ENCODE measurements at regions of chr16 and their contacts with region 1.

Region 1: GRCh38 chr16:77599793-77600415 is 122.4 kb upstream of the NUDT7 start:
- DNase-seq: peak; percentile 19
- ATAC-seq: peak; percentile 80
- H3K4me3 ChIP-seq: no peak overlapping the region
- H3K27ac ChIP-seq: no peak overlapping the region
- H3K4me1 ChIP-seq: no peaks in the 10 kb centered on the region
- H3K27me3 ChIP-seq: peaks cover 33% of the 10 kb centered on the region
- CTCF ChIP-seq: peak; percentile 49 to 85 (median 83); a peak in 5 of 6 replicates
- POLR2A ChIP-seq: no peak
- RAD21 ChIP-seq: peak; percentile 52

Region 2: GRCh38 chr16:77223184-77223583 is 376.7 kb before region 1 on chr16:
- CTCF ChIA-PET with region 1: no interaction called
- POLR2A ChIA-PET with region 1: no interaction called
- RAD21 ChIA-PET with region 1: no interaction called
- intact Hi-C with region 1: no loop called
- DNase-seq: no peak
- ATAC-seq: peak; percentile 61
- H3K4me3 ChIP-seq: no peak overlapping the region
- H3K27ac ChIP-seq: no peak overlapping the region
- H3K4me1 ChIP-seq: peaks cover 35 to 46% of the 10 kb centered on the region in 2 experiments
- H3K27me3 ChIP-seq: no peaks in the 10 kb centered on the region
- CTCF ChIP-seq: peak in 2 of 3 experiments; percentile 78 to 82; a peak in 4 of 6 replicates
- POLR2A ChIP-seq: no peak
- RAD21 ChIP-seq: peak; percentile 10; the same call in 1 of the 2 replicates

Region 3: DNA sequence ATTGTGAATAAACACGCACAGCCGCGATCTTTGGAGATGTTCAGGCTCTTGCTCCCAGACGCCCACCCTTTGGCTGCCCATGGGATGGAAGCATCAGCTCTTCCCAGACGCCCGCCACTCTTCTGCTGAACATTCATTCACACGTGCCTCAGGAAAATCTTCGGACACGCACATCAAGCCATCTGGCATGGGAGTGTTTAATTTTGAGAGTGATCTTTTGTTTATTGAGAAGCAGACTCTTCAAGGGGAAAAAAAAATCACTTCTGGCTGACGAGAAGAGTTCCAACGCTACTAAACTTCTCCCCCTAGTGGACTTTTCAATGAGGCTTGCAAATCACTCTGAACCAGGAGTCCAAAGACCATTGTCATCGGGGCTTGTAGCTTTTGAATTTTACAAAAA is 60.4 kb after region 1 on chr16:
- CTCF ChIA-PET with region 1: no interaction called
- POLR2A ChIA-PET with region 1: no interaction called
- RAD21 ChIA-PET with region 1: no interaction called
- intact Hi-C with region 1: loop called (anchors 5 kb)
- DNase-seq: peak; percentile 22
- ATAC-seq: peak; percentile 74
- H3K4me3 ChIP-seq: no peak overlapping the region
- H3K27ac ChIP-seq: no peak overlapping the region
- H3K4me1 ChIP-seq: no peaks in the 10 kb centered on the region
- H3K27me3 ChIP-seq: no peaks in the 10 kb centered on the region
- CTCF ChIP-seq: peak; percentile 49 to 58 (median 52); a peak in 5 of 6 replicates
- POLR2A ChIP-seq: no peak
- RAD21 ChIP-seq: peak; percentile 55; the same call in 1 of the 2 replicates

Region 4: DNA sequence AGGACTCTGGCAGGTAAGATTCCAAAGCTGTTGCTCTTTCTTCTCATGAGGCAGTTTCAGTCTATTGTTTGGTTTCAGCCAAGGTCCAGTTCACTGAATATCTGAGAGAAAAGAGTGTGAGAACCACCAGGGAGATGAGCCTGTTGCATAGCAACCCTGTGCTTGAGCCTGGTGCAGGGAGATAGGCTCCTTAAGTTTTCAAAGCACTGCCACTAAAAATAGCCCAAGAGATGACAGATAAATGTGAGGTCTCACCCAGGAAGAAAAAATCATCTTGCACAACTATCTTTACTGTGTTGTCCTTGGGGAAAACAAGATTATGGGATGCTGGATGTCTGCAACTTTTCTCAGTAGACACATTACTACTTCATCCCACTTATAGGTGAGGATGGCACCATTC is 96.2 kb after region 1 on chr16:
- CTCF ChIA-PET with region 1: no interaction called
- POLR2A ChIA-PET with region 1: no interaction called
- RAD21 ChIA-PET with region 1: no interaction called
- intact Hi-C with region 1: no loop called
- DNase-seq: no peak
- ATAC-seq: no peak
- H3K4me3 ChIP-seq: no peak overlapping the region
- H3K27ac ChIP-seq: no peak overlapping the region
- H3K4me1 ChIP-seq: no peaks in the 10 kb centered on the region
- H3K27me3 ChIP-seq: peaks cover 51% of the 10 kb centered on the region
- CTCF ChIP-seq: no peak
- POLR2A ChIP-seq: no peak
- RAD21 ChIP-seq: no peak

Region 5: GRCh38 chr16:77971306-77972271 is 371.7 kb after region 1 on chr16:
- CTCF ChIA-PET with region 1: no interaction called
- POLR2A ChIA-PET with region 1: no interaction called
- RAD21 ChIA-PET with region 1: no interaction called
- intact Hi-C with region 1: loop called (anchors 2 kb)
- DNase-seq: peak; percentile 58
- ATAC-seq: peak; percentile 94
- H3K4me3 ChIP-seq: no peak overlapping the region
- H3K27ac ChIP-seq: no peak overlapping the region
- H3K4me1 ChIP-seq: no peaks in the 10 kb centered on the region
- H3K27me3 ChIP-seq: peaks cover 13% of the 10 kb centered on the region
- CTCF ChIP-seq: peak; percentile 69 to 86 (median 71); a peak in 5 of 6 replicates
- POLR2A ChIP-seq: no peak
- RAD21 ChIP-seq: peak; percentile 82